H1 (cell line): ENCODE measurements at regions of chr3 and their contacts with region 1.

Region 1: GRCh38 chr3:123489400-123490004 is 40.6 kb upstream of the ADCY5 start:
- DNase-seq: peak; percentile 62 to 96
- H3K4me3 ChIP-seq: no peak overlapping the region
- H3K27ac ChIP-seq: no peak overlapping the region
- H3K4me1 ChIP-seq: no peaks in the 10 kb centered on the region
- H3K27me3 ChIP-seq: no peaks in the 10 kb centered on the region
- CTCF ChIP-seq: peak; percentile 85 to 95 (median 93)
- EP300 ChIP-seq: no peak
- POLR2A ChIP-seq: no peak
- RAD21 ChIP-seq: peak; percentile 99

Region 2: DNA sequence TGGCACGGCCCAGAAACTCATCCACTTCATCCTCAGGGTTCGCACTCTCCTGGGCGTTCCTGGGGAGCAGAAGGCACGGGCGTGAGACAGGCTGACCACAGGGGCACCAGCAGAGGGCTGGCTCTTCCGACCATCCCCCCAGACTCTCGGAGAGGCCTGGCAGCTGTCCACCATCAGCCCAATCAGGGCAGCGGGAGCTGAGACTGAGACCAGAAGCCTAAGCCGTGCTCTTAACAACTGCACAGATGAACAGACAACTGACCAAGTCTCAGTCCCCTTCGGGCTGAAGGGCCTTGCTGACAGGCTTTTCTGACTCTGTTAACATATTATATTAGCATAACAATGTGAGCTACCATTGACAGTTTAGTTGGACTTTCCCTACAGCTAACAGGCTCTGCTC is 169.7 kb before region 1 on chr3:
- CTCF ChIA-PET with region 1: interaction called, 14 read pairs
- POLR2A ChIA-PET with region 1: interaction called, 3 read pairs
- DNase-seq: no peak
- H3K4me3 ChIP-seq: peak overlapping the region in 2 of 4 experiments; percentile 4 to 30; a peak in 2 of 8 replicates
- H3K27ac ChIP-seq: no peak overlapping the region; the same call in 1 of the 2 replicates
- H3K4me1 ChIP-seq: peaks cover 9 to 26% (median 19%) of the 10 kb centered on the region in 4 experiments
- H3K27me3 ChIP-seq: no peaks in the 10 kb centered on the region
- CTCF ChIP-seq: no peak
- EP300 ChIP-seq: peak in 1 of 2 experiments; percentile 41; a peak in 1 of 3 replicates
- POLR2A ChIP-seq: no peak
- RAD21 ChIP-seq: no peak

Region 3: GRCh38 chr3:123344175-123344906 is 145.2 kb before region 1 on chr3:
- CTCF ChIA-PET with region 1: interaction called, 15 read pairs
- POLR2A ChIA-PET with region 1: no interaction called
- DNase-seq: no peak
- H3K4me3 ChIP-seq: no peak overlapping the region
- H3K27ac ChIP-seq: no peak overlapping the region
- H3K4me1 ChIP-seq: peaks cover 5 to 17% (median 9%) of the 10 kb centered on the region in 4 experiments; a peak in 6 of 7 replicates
- H3K27me3 ChIP-seq: no peaks in the 10 kb centered on the region
- CTCF ChIP-seq: no peak
- EP300 ChIP-seq: no peak
- POLR2A ChIP-seq: no peak
- RAD21 ChIP-seq: no peak

Region 4: DNA sequence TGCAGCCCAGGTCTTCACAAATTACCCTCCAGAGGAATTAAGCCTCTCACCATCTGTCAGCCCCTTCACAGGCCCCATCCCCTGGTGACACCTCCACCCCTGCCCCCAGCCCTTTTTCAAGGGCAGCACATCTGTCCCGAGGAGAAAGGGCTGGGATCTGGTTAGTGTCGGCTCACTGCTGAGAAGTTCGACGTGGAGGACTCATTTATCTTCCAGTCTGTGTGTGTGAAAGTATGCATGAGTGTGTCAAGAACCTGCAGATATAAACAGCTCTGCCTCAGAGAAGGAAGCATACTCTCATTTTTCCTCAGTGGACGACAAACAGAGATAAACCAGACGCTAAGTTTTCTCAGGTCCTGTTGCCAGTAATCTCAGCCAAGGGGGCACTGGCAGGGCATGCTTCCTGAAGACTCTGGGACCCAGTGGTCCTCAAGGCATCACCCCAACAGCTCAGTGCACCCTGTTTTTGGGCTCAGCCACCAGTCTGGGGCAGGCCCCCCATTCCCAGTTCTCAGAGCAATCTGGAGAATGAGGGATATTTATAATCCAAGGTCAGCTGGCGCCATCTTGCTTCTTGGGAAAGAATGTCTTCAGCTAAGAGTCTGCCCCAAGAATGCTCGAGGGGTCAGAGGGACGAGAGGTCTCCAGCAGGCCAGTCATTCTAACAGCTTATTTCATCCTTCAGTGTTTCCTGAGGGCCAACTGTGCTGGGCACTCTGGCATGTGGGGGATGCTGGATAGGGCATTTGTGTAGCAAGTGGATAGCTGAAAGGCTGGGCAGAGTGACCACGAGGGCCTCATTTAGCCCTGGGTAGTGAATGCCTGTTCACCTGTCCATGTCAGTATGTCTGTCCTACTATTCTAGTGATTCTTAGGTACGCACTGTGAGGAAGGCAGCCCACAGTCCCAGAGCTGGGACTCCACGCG is 114.2 kb before region 1 on chr3:
- CTCF ChIA-PET with region 1: interaction called, 35 read pairs
- POLR2A ChIA-PET with region 1: no interaction called
- DNase-seq: no peak
- H3K4me3 ChIP-seq: no peak overlapping the region
- H3K27ac ChIP-seq: no peak overlapping the region
- H3K4me1 ChIP-seq: peaks cover 0 to 4% (median 0%) of the 10 kb centered on the region in 4 experiments; a peak in 1 of 7 replicates
- H3K27me3 ChIP-seq: peaks cover 0 to 2% (median 0%) of the 10 kb centered on the region in 4 experiments; a peak in 1 of 7 replicates
- CTCF ChIP-seq: peak; percentile 29 to 67 (median 54)
- EP300 ChIP-seq: no peak
- POLR2A ChIP-seq: no peak
- RAD21 ChIP-seq: peak; percentile 77 to 84

Region 5: DNA sequence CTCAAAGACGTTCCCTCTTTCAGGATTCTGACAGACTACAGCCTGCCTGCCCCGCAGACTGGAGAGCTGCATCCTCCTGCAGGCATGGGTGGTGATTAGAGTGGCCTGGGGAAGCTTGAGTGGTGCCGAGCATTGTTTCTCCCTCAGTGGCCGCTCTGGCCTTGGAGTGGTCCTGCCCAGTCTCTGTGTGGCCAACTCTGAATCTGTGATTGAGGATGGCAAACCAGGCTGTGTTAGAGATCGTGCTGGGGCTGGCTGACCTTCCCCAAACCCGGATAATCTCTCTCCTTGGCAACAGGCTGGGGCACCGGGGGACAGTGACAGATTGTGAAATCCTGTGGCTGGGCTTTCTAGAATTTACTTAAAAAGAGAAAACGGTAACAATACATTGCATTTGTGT is 29.6 kb before region 1 on chr3:
- CTCF ChIA-PET with region 1: interaction called, 12 read pairs
- POLR2A ChIA-PET with region 1: interaction called, 3 read pairs
- DNase-seq: no peak
- H3K4me3 ChIP-seq: no peak overlapping the region
- H3K27ac ChIP-seq: no peak overlapping the region
- H3K4me1 ChIP-seq: peaks cover 0 to 6% (median 3%) of the 10 kb centered on the region in 4 experiments; a peak in 5 of 7 replicates
- H3K27me3 ChIP-seq: no peaks in the 10 kb centered on the region
- CTCF ChIP-seq: no peak
- EP300 ChIP-seq: no peak
- POLR2A ChIP-seq: no peak
- RAD21 ChIP-seq: no peak